Activated naive CD8-positive, alpha-beta T cell treated with anti-CD3 and anti-CD28 coated beads, Interleukin-2, amount 10 ng/mL, durations not matched to agents 7 days and 5 days (primary cell): ENCODE measurements at regions of chr6 and their contacts with region 1.

Region 1: GRCh38 chr6:26006086-26006939 is 43.7 kb downstream of the TRIM38 start:
- DNase-seq: no peak
- ATAC-seq: no peak
- H3K4me3 Mint-ChIP-seq: no peak overlapping the region
- H3K27ac Mint-ChIP-seq: no peak overlapping the region
- H3K4me1 Mint-ChIP-seq: peaks cover 10% of the 10 kb centered on the region
- H3K27me3 Mint-ChIP-seq: no peaks in the 10 kb centered on the region

Region 2: DNA sequence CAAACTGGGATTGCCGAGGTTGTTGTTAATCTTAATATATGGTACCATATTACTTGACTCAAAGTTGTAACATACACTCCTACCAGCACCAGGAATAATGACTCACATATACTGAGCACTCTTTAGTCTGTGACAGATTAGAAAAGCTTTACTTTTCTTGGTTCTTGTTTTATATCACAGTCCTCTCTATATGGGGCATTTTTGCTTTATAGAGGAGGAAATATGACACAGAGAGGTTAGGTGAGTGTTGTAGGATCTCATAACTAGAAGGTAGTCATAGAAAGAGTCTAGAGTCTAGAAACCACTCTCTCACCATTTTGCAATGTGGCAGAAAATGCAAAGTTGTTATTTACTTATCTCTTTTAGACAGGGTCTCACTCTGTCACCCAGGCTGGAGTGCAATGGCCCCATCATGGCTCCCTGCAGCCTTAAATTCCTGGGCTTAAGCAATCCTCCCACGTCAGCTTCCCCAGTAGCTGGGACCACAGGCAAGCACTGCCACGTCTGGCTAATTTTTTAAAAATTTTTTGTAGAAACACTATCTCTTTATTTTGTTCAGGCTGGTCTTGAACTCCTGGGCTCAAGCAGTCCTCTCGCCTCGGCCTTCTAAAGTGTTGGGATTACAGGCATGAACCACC is 30.3 kb before region 1 on chr6:
- POLR2A ChIA-PET with region 1: no interaction called
- DNase-seq: no peak
- ATAC-seq: no peak
- H3K4me3 Mint-ChIP-seq: no peak overlapping the region
- H3K27ac Mint-ChIP-seq: no peak overlapping the region
- H3K4me1 Mint-ChIP-seq: peaks cover 14% of the 10 kb centered on the region
- H3K27me3 Mint-ChIP-seq: no peaks in the 10 kb centered on the region

Region 3: DNA sequence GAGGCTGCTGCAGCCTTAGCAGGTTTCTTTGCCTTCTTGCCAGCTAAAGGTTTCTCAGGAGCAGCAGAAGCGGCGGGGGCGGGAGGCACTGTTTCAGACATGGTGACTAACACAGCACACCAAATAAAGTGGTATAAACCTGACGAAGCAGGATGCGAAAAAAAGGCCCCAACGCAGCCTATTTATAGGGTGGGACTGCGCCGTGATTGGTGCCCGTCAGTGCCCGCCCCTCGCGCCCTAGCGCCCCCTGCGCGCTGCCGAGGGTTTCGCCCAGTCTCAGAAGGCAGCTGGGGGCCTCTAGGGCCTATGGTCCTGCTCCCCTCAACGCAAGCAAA is 11.3 kb after region 1 on chr6:
- POLR2A ChIA-PET with region 1: interaction called, 28 read pairs
- DNase-seq: peak; percentile 84
- ATAC-seq: peak; percentile 24
- H3K4me3 Mint-ChIP-seq: peak overlapping the region; percentile 77
- H3K27ac Mint-ChIP-seq: peak overlapping the region; percentile 92
- H3K4me1 Mint-ChIP-seq: peaks cover 26% of the 10 kb centered on the region
- H3K27me3 Mint-ChIP-seq: no peaks in the 10 kb centered on the region